Activated naive CD4-positive, alpha-beta T cell treated with anti-CD3 and anti-CD28 coated beads for 36 hours (primary cell): ENCODE measurements at regions of chr11 and their contacts with region 1.

Region 1: DNA sequence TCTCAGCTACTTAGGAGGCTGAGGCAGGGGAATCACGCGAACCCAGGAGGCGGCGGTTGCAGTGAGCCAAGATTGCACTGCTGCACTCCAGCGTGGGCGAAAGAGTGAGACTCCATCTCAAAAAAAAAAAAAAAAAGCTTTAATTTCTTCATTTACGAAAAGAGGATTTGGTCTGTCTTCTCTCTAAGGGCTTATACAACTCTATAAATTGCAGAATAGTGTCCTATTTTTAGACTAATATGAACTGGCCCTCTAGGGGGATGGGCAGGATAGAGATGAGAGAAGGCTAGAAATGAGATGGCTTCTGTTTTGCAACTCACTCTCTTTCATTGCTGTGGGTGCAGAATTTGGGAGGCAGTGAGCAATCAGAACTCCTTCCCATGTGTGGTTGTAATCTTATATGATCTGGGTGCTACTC is 11.3 kb downstream of the MAML2 start:
- DNase-seq: no peak
- H3K4me3 Mint-ChIP-seq: no peak overlapping the region
- H3K27ac Mint-ChIP-seq: peak overlapping the region; percentile 47
- H3K4me1 Mint-ChIP-seq: peaks cover 82% of the 10 kb centered on the region
- H3K27me3 Mint-ChIP-seq: no peaks in the 10 kb centered on the region

Region 2: DNA sequence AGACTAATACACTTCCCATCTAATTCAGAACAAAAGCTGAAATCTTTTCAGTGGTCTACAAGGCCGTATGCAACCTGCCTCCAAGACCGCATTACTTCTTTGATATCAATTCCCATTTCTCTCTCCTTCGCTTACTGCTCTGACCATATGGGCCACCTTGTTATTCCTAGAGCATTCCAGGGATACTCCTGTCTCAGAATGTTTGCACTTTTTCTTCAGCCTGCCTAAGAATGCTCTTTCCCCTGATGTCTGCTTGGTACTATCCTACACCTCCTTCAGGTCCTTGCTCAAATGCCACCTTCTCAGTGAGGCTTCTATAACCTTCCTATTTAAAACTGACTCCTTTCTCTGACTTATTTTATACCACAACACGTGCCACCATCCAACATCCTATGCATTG is 59.9 kb before region 1 on chr11:
- CTCF ChIA-PET with region 1: no interaction called
- intact Hi-C with region 1: no loop called
- DNase-seq: no peak
- H3K4me3 Mint-ChIP-seq: no peak overlapping the region
- H3K27ac Mint-ChIP-seq: peak overlapping the region; percentile 71
- H3K4me1 Mint-ChIP-seq: peaks cover 70% of the 10 kb centered on the region
- H3K27me3 Mint-ChIP-seq: no peaks in the 10 kb centered on the region

Region 3: GRCh38 chr11:96314326-96315020 is 17.2 kb before region 1 on chr11:
- CTCF ChIA-PET with region 1: interaction called, 4 read pairs
- intact Hi-C with region 1: loop called (anchors 2 kb)
- DNase-seq: no peak
- H3K4me3 Mint-ChIP-seq: no peak overlapping the region
- H3K27ac Mint-ChIP-seq: peak overlapping the region; percentile 6
- H3K4me1 Mint-ChIP-seq: peaks cover 88% of the 10 kb centered on the region
- H3K27me3 Mint-ChIP-seq: no peaks in the 10 kb centered on the region

Region 4: DNA sequence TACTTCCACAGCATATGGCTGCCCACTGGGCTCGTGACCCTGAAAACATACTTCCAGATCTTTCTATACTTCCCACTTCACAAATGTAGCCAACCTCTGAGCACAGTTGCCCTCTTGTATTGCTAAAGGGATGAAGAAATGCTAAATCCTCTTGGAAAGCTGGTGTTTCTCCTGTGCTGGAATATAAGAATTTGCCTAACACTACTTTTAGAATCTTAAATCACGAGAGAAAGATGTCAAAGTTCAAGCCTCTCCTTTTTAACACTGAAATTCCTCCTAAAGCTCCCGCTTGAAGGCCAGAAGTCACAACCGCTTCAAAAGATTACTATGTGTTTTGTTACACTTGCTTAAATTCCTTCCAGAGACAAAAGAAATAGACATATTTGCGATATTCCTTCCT is 10.6 kb before region 1 on chr11:
- CTCF ChIA-PET with region 1: interaction called, 3 read pairs
- intact Hi-C with region 1: loop called (anchors 1 kb)
- DNase-seq: no peak
- H3K4me3 Mint-ChIP-seq: no peak overlapping the region
- H3K27ac Mint-ChIP-seq: no peak overlapping the region
- H3K4me1 Mint-ChIP-seq: peaks cover 94% of the 10 kb centered on the region
- H3K27me3 Mint-ChIP-seq: no peaks in the 10 kb centered on the region